Activated CD4-positive, alpha-beta memory T cell treated with anti-CD3 and anti-CD28 coated beads for 36 hours (primary cell): ENCODE measurements at regions of chr16 and their contacts with region 1.

Region 1: DNA sequence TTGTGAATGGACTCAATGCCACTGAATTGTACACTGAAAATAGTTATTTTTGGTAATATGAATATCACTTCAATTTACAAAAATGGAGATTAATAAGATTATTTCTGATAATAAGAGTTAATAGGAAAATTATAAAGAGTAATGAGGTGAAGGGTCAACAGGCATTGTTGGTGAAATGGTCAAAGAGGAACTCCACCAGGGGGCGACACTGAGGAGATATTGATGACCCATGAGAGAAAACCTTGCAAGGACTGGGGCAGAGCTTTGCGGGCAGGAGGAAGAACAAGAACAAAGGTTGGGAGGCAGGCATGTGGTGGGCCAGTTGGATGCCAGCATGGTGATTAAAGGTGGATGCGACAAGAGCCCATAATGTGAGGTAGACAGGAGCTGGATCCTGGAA is 74.0 kb upstream of the XYLT1 start:
- DNase-seq: peak; percentile 39
- H3K4me3 Mint-ChIP-seq: no peak overlapping the region
- H3K27ac Mint-ChIP-seq: no peak overlapping the region
- H3K4me1 Mint-ChIP-seq: no peaks in the 10 kb centered on the region
- H3K27me3 Mint-ChIP-seq: peaks cover under 1% of the 10 kb centered on the region

Region 2: GRCh38 chr16:17134586-17134985 is 410.2 kb before region 1 on chr16:
- CTCF ChIA-PET with region 1: no interaction called
- POLR2A ChIA-PET with region 1: no interaction called
- intact Hi-C with region 1: no loop called
- DNase-seq: no peak
- H3K4me3 Mint-ChIP-seq: no peak overlapping the region
- H3K27ac Mint-ChIP-seq: no peak overlapping the region
- H3K4me1 Mint-ChIP-seq: no peaks in the 10 kb centered on the region
- H3K27me3 Mint-ChIP-seq: no peaks in the 10 kb centered on the region

Region 3: GRCh38 chr16:17556276-17557052 is 11.7 kb after region 1 on chr16:
- CTCF ChIA-PET with region 1: interaction called, 12 read pairs
- POLR2A ChIA-PET with region 1: no interaction called
- intact Hi-C with region 1: no loop called
- DNase-seq: no peak
- H3K4me3 Mint-ChIP-seq: no peak overlapping the region
- H3K27ac Mint-ChIP-seq: peak overlapping the region; percentile 13
- H3K4me1 Mint-ChIP-seq: peaks cover 5% of the 10 kb centered on the region
- H3K27me3 Mint-ChIP-seq: peaks cover 16% of the 10 kb centered on the region